Activated B cell treated with CpG ODN at 0.5 μM for 24 hours (primary cell): ENCODE measurements at regions of chr10 and their contacts with region 1.

Region 1: GRCh38 chr10:78991187-78991586 is 77.6 kb upstream of the ZMIZ1 start:
- DNase-seq: no peak
- ATAC-seq: peak; percentile 59
- H3K4me3 Mint-ChIP-seq: no peak overlapping the region
- H3K27ac Mint-ChIP-seq: no peak overlapping the region
- H3K4me1 Mint-ChIP-seq: peaks cover 29% of the 10 kb centered on the region
- H3K27me3 Mint-ChIP-seq: peaks cover 22% of the 10 kb centered on the region
- CTCF ChIP-seq: no peak

Region 2: DNA sequence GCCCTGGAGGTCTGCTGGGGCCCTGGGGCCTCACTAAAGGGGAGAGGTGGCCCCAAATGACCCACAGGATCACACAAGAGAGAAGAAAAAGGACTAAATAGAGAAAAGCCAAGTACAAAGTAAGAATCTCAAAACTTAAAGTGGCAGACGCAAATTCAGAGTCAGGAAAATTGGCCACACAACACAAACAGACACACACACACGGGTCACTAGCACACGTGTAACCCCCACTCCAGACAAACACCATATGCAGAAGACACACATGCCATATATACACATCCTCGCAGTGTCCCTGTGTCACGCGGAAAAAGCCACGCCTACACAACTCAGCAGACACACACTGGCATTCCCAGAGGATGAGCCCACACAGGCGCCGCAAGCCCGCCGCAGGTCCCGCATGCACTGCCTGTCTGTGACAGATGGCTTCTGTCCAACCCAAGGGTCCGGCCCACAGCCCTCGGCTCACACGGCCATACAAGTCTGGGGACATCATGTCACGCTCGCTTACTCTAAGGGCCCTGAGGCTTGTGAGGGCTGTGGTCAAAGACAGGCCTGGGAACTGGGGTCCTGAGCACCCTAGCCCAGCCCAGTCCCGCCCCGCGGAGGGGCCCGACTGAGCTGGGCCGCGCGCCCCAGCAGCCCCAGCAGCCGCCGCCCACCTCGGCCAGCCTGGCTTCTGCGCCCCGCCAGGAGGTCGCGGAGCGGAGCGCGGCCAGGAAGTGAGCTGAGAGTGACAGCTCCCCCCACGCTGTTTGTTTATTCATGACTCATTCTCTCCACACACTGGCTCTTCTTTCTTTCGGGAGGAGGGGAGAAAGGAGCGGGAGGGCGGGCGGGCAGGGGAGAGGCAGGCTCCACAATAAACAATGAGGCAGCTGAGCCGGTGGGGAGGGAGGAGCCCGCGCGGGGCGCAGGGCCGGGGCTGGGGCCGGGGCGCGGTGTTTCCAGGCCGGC is 18.0 kb before region 1 on chr10:
- CTCF ChIA-PET with region 1: no interaction called
- POLR2A ChIA-PET with region 1: interaction called, 5 read pairs
- intact Hi-C with region 1: loop called (anchors 1 kb)
- DNase-seq: peak; percentile 41
- ATAC-seq: peak; percentile 61
- H3K4me3 Mint-ChIP-seq: peak overlapping the region; percentile 73
- H3K27ac Mint-ChIP-seq: no peak overlapping the region
- H3K4me1 Mint-ChIP-seq: peaks cover 14% of the 10 kb centered on the region
- H3K27me3 Mint-ChIP-seq: peaks cover 52% of the 10 kb centered on the region
- CTCF ChIP-seq: no peak